ENCODE measurements at regions of chr6 and their contacts with region 1.

Region 1: DNA sequence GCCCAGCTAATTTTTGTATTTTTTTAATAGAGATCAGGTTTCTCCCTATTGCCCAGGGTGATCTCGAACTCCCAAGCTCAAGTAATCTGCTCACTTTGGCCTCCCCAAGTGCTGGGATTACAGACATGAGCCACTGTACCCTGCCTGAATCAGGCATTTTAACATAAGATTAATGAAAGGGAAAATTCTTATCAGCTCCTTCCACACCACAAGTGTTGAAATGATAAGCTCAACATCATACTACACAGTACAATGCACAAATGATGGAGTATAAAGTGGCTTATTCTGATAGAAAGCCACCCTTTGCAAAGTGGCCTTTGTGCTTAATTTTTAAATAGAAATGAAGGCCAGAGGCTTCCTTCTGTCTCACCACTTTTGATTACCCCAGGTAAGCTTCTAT is 71.3 kb upstream of the MCHR2 start:
- DNase-seq: no peak
- H3K4me3 Mint-ChIP-seq: no peak overlapping the region
- H3K27ac Mint-ChIP-seq: no peak overlapping the region
- H3K4me1 Mint-ChIP-seq: no peaks in the 10 kb centered on the region
- H3K27me3 Mint-ChIP-seq: no peaks in the 10 kb centered on the region
- CTCF ChIP-seq: no peak

Region 2: DNA sequence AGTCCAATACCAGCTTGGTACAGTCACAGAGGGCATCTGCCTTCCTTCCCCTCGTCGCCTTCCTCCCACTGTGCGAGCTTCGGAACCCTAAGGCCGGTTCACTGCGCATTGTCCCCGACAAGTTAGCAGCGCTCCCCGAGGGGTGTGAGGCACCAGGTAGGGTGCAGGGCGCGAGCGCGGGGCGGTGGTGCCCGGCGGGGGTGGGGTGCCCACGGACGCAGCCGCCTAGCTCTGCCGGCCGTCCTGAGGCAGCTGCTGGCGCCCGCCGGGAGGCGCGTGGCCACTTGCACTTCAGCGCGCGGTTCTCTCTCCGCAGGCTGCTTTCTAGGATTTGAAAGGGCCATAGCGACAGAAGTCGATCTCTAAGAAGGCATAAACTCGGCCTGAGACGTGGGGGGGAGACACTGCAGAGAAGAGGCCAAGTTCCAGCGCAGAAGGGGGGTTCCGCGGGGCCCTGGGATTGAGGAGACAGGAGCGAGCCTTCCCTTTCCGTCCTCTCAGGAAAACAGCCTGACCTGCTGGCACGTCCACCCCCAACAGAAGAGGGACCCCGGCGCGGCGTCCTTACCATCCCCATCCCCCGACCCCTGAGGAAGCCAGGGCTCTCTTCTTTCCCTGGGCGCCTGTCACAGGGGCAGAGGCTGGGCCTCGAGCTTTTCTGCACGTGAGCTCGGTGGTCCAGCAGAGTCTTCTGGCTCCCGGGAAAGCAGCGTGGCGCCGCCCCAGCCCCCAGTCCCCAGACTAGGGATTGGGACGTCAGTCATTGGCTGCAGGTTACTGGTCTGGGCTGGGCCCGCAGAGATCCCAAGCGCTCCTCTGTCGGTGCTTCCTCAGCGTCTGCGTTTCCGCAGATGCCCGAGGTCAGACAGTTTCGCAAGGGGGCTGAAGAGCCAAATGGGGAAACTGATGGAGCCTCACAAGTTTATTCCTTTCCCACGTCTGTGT is 474.3 kb before region 1 on chr6:
- CTCF ChIA-PET with region 1: no interaction called
- intact Hi-C with region 1: no loop called
- DNase-seq: no peak
- H3K4me3 Mint-ChIP-seq: no peak overlapping the region
- H3K27ac Mint-ChIP-seq: no peak overlapping the region
- H3K4me1 Mint-ChIP-seq: peaks cover 10% of the 10 kb centered on the region
- H3K27me3 Mint-ChIP-seq: peaks cover 72% of the 10 kb centered on the region
- CTCF ChIP-seq: no peak

Region 3: DNA sequence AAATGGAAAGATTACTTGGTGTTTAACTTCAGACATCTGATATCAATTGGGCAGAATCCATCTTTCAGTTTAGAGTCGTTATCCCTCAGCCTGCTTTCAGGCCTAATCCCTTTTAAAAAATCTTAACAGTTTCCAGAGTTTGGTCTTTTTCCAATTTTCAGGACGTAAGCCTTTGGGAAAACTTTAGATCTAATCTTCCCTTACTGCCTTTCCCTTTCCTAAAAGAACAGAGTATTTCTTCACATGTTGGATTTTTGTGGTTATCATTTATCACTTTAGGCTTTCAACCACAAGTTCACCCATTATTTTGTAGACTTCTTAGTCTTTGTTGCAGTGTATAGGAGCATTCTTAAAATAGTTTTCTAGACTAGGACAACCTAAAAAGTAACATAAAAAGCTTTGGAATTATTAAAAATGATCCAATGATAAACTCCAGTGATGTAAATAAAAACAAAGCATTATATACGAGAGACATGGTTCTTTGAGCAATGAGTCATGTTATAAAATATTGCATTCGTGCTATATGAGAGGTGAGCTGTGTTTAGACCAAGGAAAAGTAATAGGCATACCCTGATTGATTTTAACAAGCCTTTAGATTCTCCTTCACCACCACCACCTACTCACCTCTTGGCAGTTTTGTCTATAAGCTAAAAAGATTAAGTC is 19.1 kb after region 1 on chr6:
- CTCF ChIA-PET with region 1: no interaction called
- intact Hi-C with region 1: loop called (anchors 1 kb)
- DNase-seq: no peak
- H3K4me3 Mint-ChIP-seq: no peak overlapping the region
- H3K27ac Mint-ChIP-seq: no peak overlapping the region
- H3K4me1 Mint-ChIP-seq: peaks cover 6% of the 10 kb centered on the region
- H3K27me3 Mint-ChIP-seq: no peaks in the 10 kb centered on the region
- CTCF ChIP-seq: no peak

Region 4: DNA sequence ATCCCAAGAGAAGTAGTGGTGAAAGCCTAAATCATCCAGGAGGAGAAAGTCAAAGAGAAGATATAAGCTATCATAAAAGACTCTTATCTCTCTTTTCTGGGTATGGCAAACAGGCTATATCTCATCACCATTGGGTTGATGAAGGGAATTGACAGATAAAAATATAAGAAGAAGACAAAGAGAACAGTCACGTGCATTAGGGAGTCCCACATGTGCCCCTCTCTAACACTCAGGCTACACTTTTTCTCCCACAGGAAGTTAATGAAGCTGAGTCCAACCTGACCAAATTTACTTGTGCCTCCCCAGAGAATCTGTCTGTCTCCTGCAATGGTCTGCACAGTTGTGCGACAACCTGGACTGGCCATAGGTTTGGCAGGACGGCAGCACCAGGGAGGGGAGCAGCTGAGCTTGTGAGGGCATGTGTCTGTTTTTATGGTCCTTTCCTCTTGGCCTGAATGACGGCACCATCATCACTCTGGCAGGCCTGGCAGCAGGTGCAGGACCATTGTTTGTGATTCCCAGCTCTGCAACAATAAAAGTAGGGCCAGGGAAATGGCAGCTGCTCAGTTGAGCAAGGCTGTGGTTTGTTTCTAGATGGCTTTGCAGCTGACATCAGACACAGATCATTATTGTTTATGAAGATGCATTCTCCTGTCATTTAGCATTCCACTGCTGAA is 73.1 kb after region 1 on chr6:
- CTCF ChIA-PET with region 1: no interaction called
- intact Hi-C with region 1: no loop called
- DNase-seq: no peak
- H3K4me3 Mint-ChIP-seq: no peak overlapping the region
- H3K27ac Mint-ChIP-seq: no peak overlapping the region
- H3K4me1 Mint-ChIP-seq: no peaks in the 10 kb centered on the region
- H3K27me3 Mint-ChIP-seq: no peaks in the 10 kb centered on the region
- CTCF ChIP-seq: no peak

Region 5: GRCh38 chr6:100171533-100172321 is 106.4 kb after region 1 on chr6:
- CTCF ChIA-PET with region 1: no interaction called
- intact Hi-C with region 1: no loop called
- DNase-seq: no peak
- H3K4me3 Mint-ChIP-seq: no peak overlapping the region
- H3K27ac Mint-ChIP-seq: no peak overlapping the region
- H3K4me1 Mint-ChIP-seq: peaks cover 9% of the 10 kb centered on the region
- H3K27me3 Mint-ChIP-seq: no peaks in the 10 kb centered on the region
- CTCF ChIP-seq: no peak

Measured in Calu3 (cell line).